Gastrocnemius medialis (tissue), 4 donors: ENCODE measurements at regions of chr5 and their contacts with region 1.

Region 1: DNA sequence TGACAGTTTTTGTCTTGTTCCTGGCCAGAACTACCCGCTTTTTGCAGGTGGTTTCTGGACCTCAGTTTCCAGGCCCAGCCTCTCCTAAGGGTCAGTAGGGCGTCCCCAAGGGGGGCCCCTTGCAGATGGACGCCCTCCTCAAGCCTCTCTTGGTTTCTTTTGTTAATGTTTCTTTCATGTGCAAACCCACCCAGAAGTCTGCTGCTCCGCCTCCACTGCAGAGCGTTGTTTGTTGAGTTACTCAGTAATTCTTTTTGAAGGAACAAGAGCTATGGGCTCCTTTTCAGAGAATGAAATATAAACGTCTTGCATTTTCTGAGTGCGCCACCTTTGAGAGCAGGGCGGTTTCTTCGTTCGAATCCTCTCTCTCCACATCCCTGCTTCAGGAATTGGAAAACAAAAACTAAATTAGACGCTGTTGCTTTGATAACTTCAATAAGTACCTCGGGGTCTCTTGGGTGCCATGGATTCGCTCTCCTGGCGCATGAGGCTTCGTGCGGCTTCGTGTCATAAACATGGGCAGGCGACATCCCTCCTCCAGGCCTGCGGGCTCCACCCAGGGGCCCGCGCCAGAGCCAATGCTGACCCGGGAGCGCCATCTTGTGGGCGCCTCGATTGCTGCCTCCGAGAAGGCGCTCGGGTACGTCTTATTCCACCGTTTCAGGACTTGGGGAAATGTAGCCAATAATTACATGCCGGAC is 38.3 kb upstream of the CKMT2 start:
- DNase-seq: peak; percentile 43 to 74
- ATAC-seq: peak; percentile 85 to 89
- H3K4me3 ChIP-seq: no peak overlapping the region
- H3K27ac ChIP-seq: no peak overlapping the region
- H3K4me1 ChIP-seq: peaks cover 7% of the 10 kb centered on the region in 2 donors
- H3K27me3 ChIP-seq: no peaks in the 10 kb centered on the region
- CTCF ChIP-seq: peak; percentile 63 to 90 (median 81)
- POLR2A ChIP-seq: no peak

Region 2: DNA sequence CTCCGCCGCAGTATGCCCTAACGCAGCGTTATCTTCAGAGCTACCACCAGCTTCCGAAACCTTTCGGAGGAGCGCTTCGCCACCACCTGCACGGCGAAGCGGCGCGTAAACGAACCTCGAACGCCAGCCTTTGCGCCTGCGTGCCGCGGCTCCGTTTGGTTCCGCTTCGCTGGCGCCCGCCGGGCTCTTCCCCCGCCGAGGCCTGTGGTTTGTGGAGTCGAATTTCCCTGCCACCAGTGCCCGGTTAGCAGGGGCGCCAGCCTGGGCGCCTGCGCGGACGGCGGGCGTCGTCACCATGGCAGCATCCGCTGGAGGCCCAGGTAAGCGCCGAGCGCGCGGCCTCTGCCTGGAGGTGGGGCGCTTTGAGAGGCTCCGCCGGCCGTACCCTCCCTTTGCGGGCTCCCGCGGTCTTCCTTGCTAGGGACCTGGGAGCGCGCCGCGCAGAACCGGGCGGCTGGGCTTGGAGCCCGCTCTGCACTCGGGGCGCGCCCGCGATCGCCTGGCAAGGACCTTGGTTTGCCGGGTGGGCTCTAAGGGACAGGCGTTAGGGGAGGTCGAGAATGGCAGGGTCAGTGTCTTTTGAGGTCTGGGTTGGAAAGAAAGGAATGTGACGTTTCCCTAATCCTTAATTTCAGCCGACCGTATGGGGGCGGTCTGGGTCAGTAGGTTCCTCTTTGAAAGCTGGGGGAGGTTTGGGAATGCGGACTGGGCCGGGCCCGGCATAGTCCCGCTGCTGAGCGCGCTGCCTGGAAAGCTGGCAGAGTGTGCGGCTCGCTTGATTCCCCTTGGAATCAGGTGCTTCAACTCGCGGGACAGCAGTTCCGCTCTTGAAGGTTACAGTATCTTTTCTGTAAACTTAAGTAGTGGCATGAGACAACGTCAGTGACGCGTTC is 706.7 kb before region 1 on chr5 and contains the start of gene FAM151B:
- in situ Hi-C with region 1: no loop called
- intact Hi-C with region 1: loop called (anchors 10 kb)
- DNase-seq: peak; percentile 74 to 84
- ATAC-seq: peak; percentile 92 to 95
- H3K4me3 ChIP-seq: peak within 1 kb of the TSS; percentile 66 to 98 (median 78)
- H3K27ac ChIP-seq: peak within 1 kb of the TSS; percentile 46 to 76 (median 70)
- H3K4me1 ChIP-seq: no peaks in the 10 kb centered on the region
- H3K27me3 ChIP-seq: no peaks in the 10 kb centered on the region
- CTCF ChIP-seq: peak in 1 of 5 experiments; percentile 7
- POLR2A ChIP-seq: peak in 1 of 2 donors; percentile 25
- total RNA-seq, gene FAM151B: 0.18 to 1.6 (median 1.1) TPM

Region 3: DNA sequence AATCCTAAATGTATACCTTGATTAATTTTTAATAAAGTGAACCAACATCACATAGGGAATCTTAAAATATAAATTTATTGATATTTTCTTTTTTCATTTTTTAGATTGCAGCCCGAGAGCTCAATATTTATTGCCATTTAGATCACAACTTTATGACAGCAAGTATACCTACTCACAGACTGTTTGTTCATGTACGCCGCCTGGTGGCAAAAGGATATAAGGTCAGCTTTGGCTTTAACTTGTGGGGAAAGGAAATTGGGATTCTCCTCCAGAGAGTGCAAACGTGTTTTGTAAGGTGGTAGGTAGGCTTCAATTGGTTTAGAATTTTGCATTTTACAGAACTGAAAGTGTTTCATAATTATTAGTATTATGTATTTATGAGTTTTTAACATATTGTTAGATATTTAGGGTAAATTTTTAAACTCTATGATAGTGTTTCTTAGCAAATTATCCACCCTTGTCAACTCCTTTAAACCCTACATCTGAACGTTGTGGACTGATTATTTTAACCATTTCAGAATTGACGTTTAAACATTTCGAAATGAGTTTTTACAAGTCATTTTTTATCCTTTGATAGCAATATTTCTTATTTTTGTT is 522.5 kb before region 1 on chr5:
- in situ Hi-C with region 1: no loop called
- intact Hi-C with region 1: loop called (anchors 10 kb)
- DNase-seq: peak; percentile 15 to 39
- ATAC-seq: peak; percentile 39 to 68
- H3K4me3 ChIP-seq: no peak overlapping the region
- H3K27ac ChIP-seq: no peak overlapping the region
- H3K4me1 ChIP-seq: no peaks in the 10 kb centered on the region
- H3K27me3 ChIP-seq: no peaks in the 10 kb centered on the region
- CTCF ChIP-seq: peak; percentile 32 to 68 (median 45)
- POLR2A ChIP-seq: no peak

Region 4: GRCh38 chr5:80707645-80708044 is 487.1 kb before region 1 on chr5:
- in situ Hi-C with region 1: loop called in 1 of 4 experiments (anchors 10 kb)
- intact Hi-C with region 1: no loop called
- DNase-seq: no peak
- ATAC-seq: peak; percentile 80 to 81
- H3K4me3 ChIP-seq: no peak overlapping the region
- H3K27ac ChIP-seq: peak overlapping the region in 2 of 4 donors; percentile 27 to 51
- H3K4me1 ChIP-seq: no peaks in the 10 kb centered on the region
- H3K27me3 ChIP-seq: no peaks in the 10 kb centered on the region
- CTCF ChIP-seq: no peak
- POLR2A ChIP-seq: no peak